GM12878 (cell line): ENCODE measurements at regions of chr7 and their contacts with region 1.

Region 1: DNA sequence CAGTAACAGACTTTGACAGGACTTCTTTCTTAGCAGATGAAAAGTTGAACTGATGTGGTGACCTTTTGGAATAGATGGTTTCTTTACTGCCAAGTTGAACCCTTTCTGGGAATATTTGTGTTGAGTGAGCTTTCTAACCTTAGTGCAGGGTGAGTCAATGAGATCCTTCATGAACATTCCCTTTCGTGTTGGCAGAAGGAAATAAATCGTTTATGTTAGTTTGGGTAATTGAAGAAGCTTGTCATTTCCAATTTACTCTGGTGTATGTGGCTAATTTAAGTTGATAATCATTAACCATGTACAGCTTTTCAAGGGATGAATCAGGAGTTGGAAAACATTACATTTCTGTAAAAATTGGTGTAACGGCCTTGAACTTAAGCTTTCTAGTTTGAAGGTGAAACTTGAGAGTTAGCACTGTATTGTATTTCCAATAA is 43.4 kb downstream of the PTTG1IP2 start:
- DNase-seq: no peak
- ATAC-seq: no peak
- H3K4me3 ChIP-seq: no peak overlapping the region
- H3K27ac ChIP-seq: no peak overlapping the region
- H3K4me1 ChIP-seq: no peaks in the 10 kb centered on the region
- H3K27me3 ChIP-seq: no peaks in the 10 kb centered on the region
- CTCF ChIP-seq: no peak
- EP300 ChIP-seq: no peak
- POLR2A ChIP-seq: no peak
- RAD21 ChIP-seq: no peak

Region 2: GRCh38 chr7:90523878-90524277 is 11.0 kb after region 1 on chr7:
- CTCF ChIA-PET with region 1: interaction called, 10 read pairs
- POLR2A ChIA-PET with region 1: no interaction called
- RAD21 ChIA-PET with region 1: no interaction called
- SMC1A ChIA-PET with region 1: interaction called, 5 read pairs
- in situ Hi-C with region 1: no loop called
- intact Hi-C with region 1: no loop called
- DNase-seq: no peak
- ATAC-seq: no peak
- H3K4me3 ChIP-seq: no peak overlapping the region
- H3K27ac ChIP-seq: no peak overlapping the region
- H3K4me1 ChIP-seq: no peaks in the 10 kb centered on the region
- H3K27me3 ChIP-seq: no peaks in the 10 kb centered on the region
- CTCF ChIP-seq: no peak
- EP300 ChIP-seq: no peak
- POLR2A ChIP-seq: no peak
- RAD21 ChIP-seq: no peak